ENCODE measurements at regions of chr7 and their contacts with region 1.

Region 1: GRCh38 chr7:113421696-113422330 is 303.5 kb upstream of the SMIM30 start:
- DNase-seq: peak; percentile 74
- H3K4me3 ChIP-seq: no peak overlapping the region
- H3K27ac ChIP-seq: no peak overlapping the region
- H3K4me1 ChIP-seq: no peaks in the 10 kb centered on the region
- H3K27me3 ChIP-seq: no peaks in the 10 kb centered on the region
- CTCF ChIP-seq: peak; percentile 72 to 84
- POLR2A ChIP-seq: no peak

Region 2: GRCh38 chr7:113015032-113015645 is 406.7 kb before region 1 on chr7:
- CTCF ChIA-PET with region 1: interaction called, 72 read pairs
- POLR2A ChIA-PET with region 1: no interaction called
- dilution Hi-C with region 1: no loop called
- intact Hi-C with region 1: loop called (anchors 1 kb)
- DNase-seq: peak; percentile 34
- H3K4me3 ChIP-seq: no peak overlapping the region
- H3K27ac ChIP-seq: no peak overlapping the region
- H3K4me1 ChIP-seq: no peaks in the 10 kb centered on the region
- H3K27me3 ChIP-seq: no peaks in the 10 kb centered on the region
- CTCF ChIP-seq: peak in 1 of 2 donors; percentile 7
- POLR2A ChIP-seq: no peak

Region 3: GRCh38 chr7:113159746-113160339 is 262.0 kb before region 1 on chr7:
- CTCF ChIA-PET with region 1: interaction called, 11 read pairs
- POLR2A ChIA-PET with region 1: no interaction called
- dilution Hi-C with region 1: no loop called
- intact Hi-C with region 1: loop called (anchors 2 kb)
- DNase-seq: peak; percentile 6
- H3K4me3 ChIP-seq: no peak overlapping the region
- H3K27ac ChIP-seq: no peak overlapping the region
- H3K4me1 ChIP-seq: no peaks in the 10 kb centered on the region
- H3K27me3 ChIP-seq: no peaks in the 10 kb centered on the region
- CTCF ChIP-seq: peak; percentile 51 to 65
- POLR2A ChIP-seq: no peak

Region 4: GRCh38 chr7:113452245-113452644 is 30.4 kb after region 1 on chr7:
- CTCF ChIA-PET with region 1: no interaction called
- POLR2A ChIA-PET with region 1: no interaction called
- dilution Hi-C with region 1: no loop called
- intact Hi-C with region 1: no loop called
- DNase-seq: no peak
- H3K4me3 ChIP-seq: no peak overlapping the region
- H3K27ac ChIP-seq: no peak overlapping the region
- H3K4me1 ChIP-seq: no peaks in the 10 kb centered on the region
- H3K27me3 ChIP-seq: no peaks in the 10 kb centered on the region
- CTCF ChIP-seq: no peak
- POLR2A ChIP-seq: no peak

Measured in endothelial cell of umbilical vein (primary cell).